Heart right ventricle (tissue), 16 donors: ENCODE measurements at regions of chr6 and their contacts with region 1.

Region 1: GRCh38 chr6:46848684-46849360 is 55.6 kb downstream of the MEP1A start:
- DNase-seq: peak; percentile 83 to 88
- ATAC-seq: peak; percentile 90 to 97 (median 94)
- H3K4me3 ChIP-seq: peak overlapping the region in 4 of 10 donors; percentile 17 to 32 (median 22)
- H3K27ac ChIP-seq: peak overlapping the region in 2 of 10 donors; percentile 21 to 51
- H3K4me1 ChIP-seq: peaks cover 4 to 54% (median 38%) of the 10 kb centered on the region in 9 donors
- H3K27me3 ChIP-seq: no peaks in the 10 kb centered on the region
- CTCF ChIP-seq: peak; percentile 93 to 99 (median 99)

Region 2: GRCh38 chr6:46903175-46903574 is 54.4 kb after region 1 on chr6:
- intact Hi-C with region 1: loop called in 2 of 10 experiments (anchors 5 to 10 kb)
- DNase-seq: peak; percentile 26 to 71
- ATAC-seq: peak; percentile 69 to 90 (median 85)
- H3K4me3 ChIP-seq: no peak overlapping the region
- H3K27ac ChIP-seq: peak overlapping the region; percentile 21 to 83 (median 63)
- H3K4me1 ChIP-seq: peaks cover 4 to 98% (median 56%) of the 10 kb centered on the region in 9 donors
- H3K27me3 ChIP-seq: no peaks in the 10 kb centered on the region
- CTCF ChIP-seq: peak in 4 of 9 donors; percentile 6 to 23 (median 16)

Region 3: DNA sequence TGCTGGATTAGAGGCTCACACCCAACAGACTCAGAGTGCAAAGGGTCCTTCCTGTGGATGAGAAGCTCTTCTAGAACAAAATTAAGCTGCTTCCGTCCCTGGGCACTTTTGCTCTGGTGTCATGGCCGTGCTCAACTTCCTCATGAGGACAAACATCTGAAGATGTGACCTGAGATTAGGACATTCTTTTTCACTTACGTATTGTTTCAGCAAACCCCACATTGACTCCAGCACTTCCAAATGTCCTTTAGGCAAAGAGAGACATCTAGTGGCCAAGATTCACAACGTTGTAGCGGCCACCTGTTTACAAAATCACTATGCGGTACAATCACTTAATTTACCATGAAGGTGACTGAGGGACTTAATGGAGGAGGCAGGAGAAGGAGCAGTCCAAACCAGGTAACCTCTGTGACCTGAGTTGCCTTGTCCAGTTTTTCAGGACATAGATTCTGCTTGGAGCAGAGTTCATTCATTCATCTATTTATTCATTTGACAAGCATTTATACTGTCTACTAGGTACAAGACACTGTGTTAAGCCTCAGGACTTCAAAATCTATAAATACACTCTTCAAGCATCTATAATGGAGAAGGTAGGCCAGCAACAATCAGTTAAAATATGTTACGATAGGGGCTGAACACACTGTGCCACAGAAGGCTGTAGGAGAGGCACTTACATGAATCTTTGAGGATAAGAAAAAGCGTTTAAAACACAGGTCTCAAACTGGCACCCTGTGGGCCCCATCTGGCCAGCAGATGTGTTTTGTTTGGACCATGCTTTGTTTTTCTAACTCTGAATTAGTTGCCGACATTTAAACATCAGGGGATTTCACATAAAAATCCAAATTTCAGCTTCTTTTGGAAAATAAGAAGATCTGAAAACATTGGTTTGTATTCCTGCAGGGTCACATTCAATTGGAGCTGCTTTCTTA is 198.9 kb after region 1 on chr6:
- intact Hi-C with region 1: loop called (anchors 1 to 5 kb)
- DNase-seq: peak in 1 of 2 donors; percentile 56
- ATAC-seq: peak; percentile 78 to 94 (median 92)
- H3K4me3 ChIP-seq: no peak overlapping the region
- H3K27ac ChIP-seq: peak overlapping the region in 3 of 10 donors; percentile 36 to 54 (median 49)
- H3K4me1 ChIP-seq: peaks cover 0 to 25% (median 9%) of the 10 kb centered on the region in 9 donors
- H3K27me3 ChIP-seq: no peaks in the 10 kb centered on the region
- CTCF ChIP-seq: peak; percentile 65 to 90 (median 78)